HCT116 (cell line): ENCODE measurements at regions of chr20 and their contacts with region 1.

Region 1: DNA sequence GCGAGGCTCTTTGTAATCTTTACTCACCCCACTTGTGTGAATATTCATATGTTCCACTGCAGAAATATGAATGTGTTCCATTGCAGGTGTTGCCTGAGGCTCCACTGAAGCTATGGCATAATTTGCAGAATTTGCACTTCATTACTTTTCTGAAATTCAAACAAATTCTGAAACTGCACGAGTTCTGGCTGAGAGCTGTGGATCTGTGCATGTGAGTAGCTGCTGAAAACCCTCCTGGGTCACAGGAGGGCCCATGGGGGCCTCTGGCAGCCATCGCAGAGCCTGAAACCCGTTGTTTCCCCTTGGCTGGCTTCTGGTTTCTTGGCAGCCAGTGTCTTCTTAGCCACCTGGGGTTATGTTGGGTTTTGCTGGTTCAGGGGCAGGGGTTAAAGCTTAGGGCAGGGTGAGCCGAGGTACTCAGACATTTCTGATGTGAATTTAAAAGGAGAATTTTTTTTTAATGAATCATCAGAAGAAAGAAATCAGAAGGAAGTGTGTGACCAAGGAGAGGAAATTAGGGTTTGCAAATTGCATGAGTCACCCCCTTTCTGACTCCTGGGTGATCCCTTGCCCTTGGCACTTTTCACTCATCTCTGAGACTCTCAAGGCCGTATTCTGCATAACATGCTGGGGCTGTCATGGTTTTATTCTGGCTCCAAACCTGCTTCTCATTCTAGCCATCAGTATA is 40.6 kb downstream of the TOX2 start:
- DNase-seq: peak; percentile 87
- ATAC-seq: peak; percentile 87
- H3K4me3 ChIP-seq: peak overlapping the region in 1 of 2 experiments; percentile 15; a peak in 2 of 4 replicates
- H3K27ac ChIP-seq: peak overlapping the region; percentile 88
- H3K4me1 ChIP-seq: peaks cover 77 to 82% of the 10 kb centered on the region in 2 experiments
- H3K27me3 ChIP-seq: no peaks in the 10 kb centered on the region
- CTCF ChIP-seq: no peak
- POLR2A ChIP-seq: no peak
- RAD21 ChIP-seq: peak; percentile 36

Region 2: GRCh38 chr20:43728044-43728529 is 227.1 kb before region 1 on chr20:
- CTCF ChIA-PET with region 1: no interaction called
- POLR2A ChIA-PET with region 1: no interaction called
- RAD21 ChIA-PET with region 1: no interaction called
- intact Hi-C with region 1: no loop called
- DNase-seq: no peak
- ATAC-seq: no peak
- H3K4me3 ChIP-seq: no peak overlapping the region
- H3K27ac ChIP-seq: no peak overlapping the region
- H3K4me1 ChIP-seq: no peaks in the 10 kb centered on the region
- H3K27me3 ChIP-seq: no peaks in the 10 kb centered on the region
- CTCF ChIP-seq: no peak
- POLR2A ChIP-seq: no peak
- RAD21 ChIP-seq: no peak

Region 3: GRCh38 chr20:43942661-43943290 is 12.4 kb before region 1 on chr20:
- CTCF ChIA-PET with region 1: interaction called, 6 read pairs
- POLR2A ChIA-PET with region 1: interaction called, 10 read pairs
- RAD21 ChIA-PET with region 1: no interaction called
- intact Hi-C with region 1: no loop called
- DNase-seq: peak; percentile 21
- ATAC-seq: peak; percentile 70
- H3K4me3 ChIP-seq: peak overlapping the region in 1 of 2 experiments; percentile 41; a peak in 2 of 4 replicates
- H3K27ac ChIP-seq: peak overlapping the region; percentile 62
- H3K4me1 ChIP-seq: peaks cover 58 to 77% of the 10 kb centered on the region in 2 experiments
- H3K27me3 ChIP-seq: no peaks in the 10 kb centered on the region
- CTCF ChIP-seq: no peak
- POLR2A ChIP-seq: no peak
- RAD21 ChIP-seq: no peak

Region 4: GRCh38 chr20:43975096-43975768 is 20.0 kb after region 1 on chr20:
- CTCF ChIA-PET with region 1: no interaction called
- POLR2A ChIA-PET with region 1: interaction called, 14 read pairs
- RAD21 ChIA-PET with region 1: no interaction called
- intact Hi-C with region 1: no loop called
- DNase-seq: peak; percentile 86
- ATAC-seq: peak; percentile 89
- H3K4me3 ChIP-seq: peak overlapping the region in 1 of 2 experiments; percentile 12; a peak in 1 of 4 replicates
- H3K27ac ChIP-seq: peak overlapping the region; percentile 49
- H3K4me1 ChIP-seq: peaks cover 25 to 43% of the 10 kb centered on the region in 2 experiments
- H3K27me3 ChIP-seq: no peaks in the 10 kb centered on the region
- CTCF ChIP-seq: no peak
- POLR2A ChIP-seq: no peak
- RAD21 ChIP-seq: peak; percentile 18; the same call in 1 of the 2 replicates